Right ventricle myocardium inferior (tissue), 1 donor: ENCODE measurements at regions of chr1 and their contacts with region 1.

Region 1: GRCh38 chr1:19563324-19564097 is 78.2 kb upstream of the CAPZB start:
- DNase-seq: peak; percentile 73
- ATAC-seq: peak; percentile 88

Region 2: GRCh38 chr1:19514391-19514831 is 49.1 kb before region 1 on chr1:
- intact Hi-C with region 1: loop called (anchors 5 kb)
- DNase-seq: peak; percentile 70
- ATAC-seq: peak; percentile 94